ENCODE measurements at regions of chr16 and their contacts with region 1.

Region 1: GRCh38 chr16:48231727-48232492 is 12.2 kb upstream of the LONP2 start:
- DNase-seq: peak; percentile 49
- ATAC-seq: peak; percentile 91
- H3K4me3 ChIP-seq: no peak overlapping the region
- H3K27ac ChIP-seq: no peak overlapping the region
- H3K4me1 ChIP-seq: 0 out of 2 replicates have a peak, but pooled peaks cover 1% of the 10 kb centered on the region
- H3K27me3 ChIP-seq: peaks cover 6% of the 10 kb centered on the region
- CTCF ChIP-seq: peak; percentile 63
- POLR2A ChIP-seq: no peak
- RAD21 ChIP-seq: peak; percentile 63

Region 2: GRCh38 chr16:48182979-48183537 is 48.9 kb before region 1 on chr16:
- CTCF ChIA-PET with region 1: no interaction called
- POLR2A ChIA-PET with region 1: no interaction called
- dilution Hi-C with region 1: no loop called
- in situ Hi-C with region 1: no loop called
- intact Hi-C with region 1: no loop called
- DNase-seq: no peak
- ATAC-seq: no peak
- H3K4me3 ChIP-seq: no peak overlapping the region
- H3K27ac ChIP-seq: no peak overlapping the region
- H3K4me1 ChIP-seq: no peaks in the 10 kb centered on the region
- H3K27me3 ChIP-seq: peaks cover 15% of the 10 kb centered on the region
- CTCF ChIP-seq: no peak
- POLR2A ChIP-seq: no peak
- RAD21 ChIP-seq: no peak

Region 3: DNA sequence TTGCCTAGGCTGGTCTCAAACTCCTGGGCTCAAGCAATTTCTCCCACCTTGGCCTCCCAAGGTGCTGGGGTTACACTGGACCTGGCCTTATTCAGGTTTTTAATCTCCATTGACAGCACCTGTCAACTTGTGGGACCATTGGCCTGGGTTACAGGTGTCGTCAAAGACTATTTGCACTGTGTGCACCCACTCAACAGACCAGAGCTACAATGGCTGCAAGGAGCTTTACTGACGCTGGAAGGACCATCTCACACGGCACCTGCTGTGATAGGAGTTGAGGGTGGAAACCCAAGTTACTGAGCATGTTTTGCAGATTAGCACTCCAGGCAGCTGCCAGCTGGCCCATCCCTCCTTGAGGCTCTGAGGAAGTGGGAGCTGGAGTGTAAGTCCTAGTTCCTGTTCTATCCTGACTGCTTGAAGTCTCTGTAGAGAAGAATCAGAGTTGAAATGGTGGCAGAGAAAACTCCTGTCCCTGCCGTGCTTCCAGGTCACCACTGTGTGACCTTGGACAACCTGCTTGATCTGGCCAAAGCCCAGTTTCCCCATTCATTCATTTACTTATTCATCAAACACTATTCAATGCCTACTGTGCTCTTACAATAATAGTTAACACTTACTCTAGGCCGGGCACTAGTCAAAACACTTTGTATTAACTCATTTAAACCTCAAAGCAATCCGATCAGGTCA is 30.3 kb before region 1 on chr16:
- CTCF ChIA-PET with region 1: no interaction called
- POLR2A ChIA-PET with region 1: no interaction called
- dilution Hi-C with region 1: no loop called
- in situ Hi-C with region 1: no loop called
- intact Hi-C with region 1: loop called (anchors 1 kb)
- DNase-seq: no peak
- ATAC-seq: no peak
- H3K4me3 ChIP-seq: no peak overlapping the region
- H3K27ac ChIP-seq: no peak overlapping the region
- H3K4me1 ChIP-seq: no peaks in the 10 kb centered on the region
- H3K27me3 ChIP-seq: peaks cover 21% of the 10 kb centered on the region
- CTCF ChIP-seq: no peak
- POLR2A ChIP-seq: no peak
- RAD21 ChIP-seq: no peak

Region 4: DNA sequence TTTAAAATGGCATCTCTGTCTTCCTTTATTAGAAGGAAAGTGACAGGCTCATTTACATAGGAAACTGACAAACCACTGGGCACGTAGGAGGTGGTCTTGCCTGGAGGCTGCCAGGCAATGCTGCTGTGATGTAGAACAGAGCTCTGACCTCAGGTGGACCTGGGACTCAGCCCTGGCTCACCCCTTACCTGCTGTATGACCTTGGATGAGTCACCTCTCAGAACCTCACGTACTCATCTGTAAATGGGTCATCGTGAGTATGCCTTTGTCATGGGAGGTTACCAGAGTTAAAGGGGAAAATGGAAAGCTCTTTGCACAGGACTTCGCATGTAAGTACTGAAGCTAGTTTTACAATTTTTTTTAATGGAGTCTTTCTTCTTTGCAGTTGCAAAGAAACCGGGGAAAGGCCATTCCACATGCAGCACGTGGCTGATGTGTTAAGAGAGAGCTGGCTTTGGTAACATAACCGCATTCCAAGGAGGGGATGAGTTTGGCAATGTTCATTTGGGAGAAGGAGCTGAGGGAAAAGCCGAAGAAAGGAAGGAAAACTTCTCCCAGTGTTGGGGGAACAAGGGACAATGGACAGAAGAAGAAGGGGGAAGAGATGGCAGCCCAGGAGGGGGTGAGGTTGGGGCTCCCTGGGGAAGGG is 25.2 kb before region 1 on chr16:
- CTCF ChIA-PET with region 1: interaction called, 5 read pairs
- POLR2A ChIA-PET with region 1: interaction called, 23 read pairs
- dilution Hi-C with region 1: no loop called
- in situ Hi-C with region 1: no loop called
- intact Hi-C with region 1: loop called (anchors 1 kb)
- DNase-seq: peak; percentile 13
- ATAC-seq: 0 out of 2 replicates have a peak, but pooled peaks have one; percentile 40
- H3K4me3 ChIP-seq: no peak overlapping the region
- H3K27ac ChIP-seq: no peak overlapping the region
- H3K4me1 ChIP-seq: no peaks in the 10 kb centered on the region
- H3K27me3 ChIP-seq: peaks cover 25% of the 10 kb centered on the region
- CTCF ChIP-seq: no peak
- POLR2A ChIP-seq: no peak
- RAD21 ChIP-seq: no peak

Region 5: DNA sequence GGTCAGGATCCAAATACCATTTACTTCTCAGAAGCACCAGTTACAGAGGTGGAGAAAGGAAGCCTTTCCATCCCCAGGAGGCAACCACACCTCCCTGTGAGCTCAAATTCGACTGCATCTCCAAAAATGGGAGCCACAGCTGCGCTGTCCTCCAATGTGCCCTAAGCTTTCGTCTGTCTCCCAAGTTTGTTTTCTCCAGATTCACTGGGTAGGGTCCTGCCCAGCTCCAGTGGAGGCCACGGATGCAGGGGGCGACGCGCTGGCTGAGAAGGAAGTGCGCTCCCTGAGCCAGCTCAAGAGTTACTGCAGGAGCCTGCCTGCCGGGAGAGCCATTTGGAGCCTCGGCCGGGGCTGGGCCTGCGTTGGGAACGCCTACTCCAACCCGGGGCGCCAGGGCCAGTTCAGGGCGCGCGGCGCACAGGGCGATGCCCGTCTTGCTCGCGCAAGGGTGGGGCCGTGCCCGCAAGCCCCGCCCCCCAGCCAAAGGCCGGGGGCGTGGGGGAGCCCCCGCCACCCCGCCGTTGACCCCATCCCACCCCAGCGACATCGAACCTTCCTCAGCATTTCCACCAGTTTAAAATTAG is 133.8 kb after region 1 on chr16:
- CTCF ChIA-PET with region 1: no interaction called
- POLR2A ChIA-PET with region 1: no interaction called
- dilution Hi-C with region 1: no loop called
- in situ Hi-C with region 1: no loop called
- intact Hi-C with region 1: no loop called
- DNase-seq: peak; percentile 80
- ATAC-seq: peak; percentile 99
- H3K4me3 ChIP-seq: peak overlapping the region; percentile 50
- H3K27ac ChIP-seq: peak overlapping the region; percentile 84
- H3K4me1 ChIP-seq: peaks cover 13% of the 10 kb centered on the region
- H3K27me3 ChIP-seq: no peaks in the 10 kb centered on the region
- CTCF ChIP-seq: no peak
- POLR2A ChIP-seq: peak; percentile 77
- RAD21 ChIP-seq: no peak

Region 6: GRCh38 chr16:48426244-48427141 is 194.6 kb after region 1 on chr16:
- CTCF ChIA-PET with region 1: no interaction called
- POLR2A ChIA-PET with region 1: no interaction called
- dilution Hi-C with region 1: no loop called
- in situ Hi-C with region 1: no loop called
- intact Hi-C with region 1: no loop called
- DNase-seq: peak; percentile 32
- ATAC-seq: peak; percentile 48; the same call in 1 of the 2 replicates
- H3K4me3 ChIP-seq: no peak overlapping the region
- H3K27ac ChIP-seq: no peak overlapping the region
- H3K4me1 ChIP-seq: peaks cover 7% of the 10 kb centered on the region
- H3K27me3 ChIP-seq: no peaks in the 10 kb centered on the region
- CTCF ChIP-seq: no peak
- POLR2A ChIP-seq: no peak
- RAD21 ChIP-seq: no peak

Region 7: GRCh38 chr16:48542020-48542473 is 310.1 kb after region 1 on chr16:
- CTCF ChIA-PET with region 1: no interaction called
- POLR2A ChIA-PET with region 1: no interaction called
- dilution Hi-C with region 1: no loop called
- in situ Hi-C with region 1: no loop called
- intact Hi-C with region 1: loop called (anchors 1 kb)
- DNase-seq: peak; percentile 54
- ATAC-seq: peak; percentile 79
- H3K4me3 ChIP-seq: no peak overlapping the region
- H3K27ac ChIP-seq: no peak overlapping the region
- H3K4me1 ChIP-seq: peaks cover 5% of the 10 kb centered on the region; the same call in 1 of the 2 replicates
- H3K27me3 ChIP-seq: no peaks in the 10 kb centered on the region
- CTCF ChIP-seq: peak; percentile 68
- POLR2A ChIP-seq: 0 out of 2 replicates have a peak, but pooled peaks have one; percentile 35
- RAD21 ChIP-seq: peak; percentile 89

Region 8: DNA sequence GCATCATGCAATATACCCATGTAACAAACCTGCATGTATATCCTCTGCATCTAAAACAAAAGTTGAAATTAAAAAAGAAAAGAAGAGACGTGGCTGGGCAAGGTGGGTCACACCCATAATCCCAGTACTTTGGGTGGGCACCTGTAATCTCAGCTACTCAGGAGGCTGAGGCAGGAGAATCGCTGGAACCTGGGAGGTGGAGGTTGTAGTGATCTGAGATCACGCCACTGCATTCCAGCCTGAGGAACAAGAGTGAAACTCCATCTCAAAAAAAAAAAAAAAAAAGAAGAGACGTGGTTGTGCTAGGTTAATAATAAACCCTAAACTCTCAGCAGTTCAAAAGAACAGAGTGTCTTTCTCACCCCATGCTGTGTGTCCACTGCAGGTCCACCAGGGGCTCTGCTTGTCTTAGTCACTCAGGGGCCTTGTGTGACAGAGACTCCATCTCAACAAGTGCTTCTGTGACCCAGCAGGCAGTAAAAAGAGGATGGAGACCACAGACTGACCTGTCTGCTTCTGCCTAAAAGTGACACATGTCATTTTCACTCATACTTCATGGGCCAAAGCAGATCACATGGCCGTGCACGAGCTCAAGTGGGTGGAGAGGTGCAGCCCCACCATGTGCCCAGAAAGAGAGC is 400.3 kb after region 1 on chr16:
- CTCF ChIA-PET with region 1: interaction called, 4 read pairs
- POLR2A ChIA-PET with region 1: no interaction called
- dilution Hi-C with region 1: no loop called
- in situ Hi-C with region 1: loop called (anchors 5 kb)
- intact Hi-C with region 1: loop called (anchors 1 kb)
- DNase-seq: no peak
- ATAC-seq: no peak
- H3K4me3 ChIP-seq: no peak overlapping the region
- H3K27ac ChIP-seq: no peak overlapping the region
- H3K4me1 ChIP-seq: peaks cover 2% of the 10 kb centered on the region; the same call in 1 of the 2 replicates
- H3K27me3 ChIP-seq: peaks cover 4% of the 10 kb centered on the region; the same call in 1 of the 2 replicates
- CTCF ChIP-seq: no peak
- POLR2A ChIP-seq: no peak
- RAD21 ChIP-seq: no peak

Measured in IMR-90 (cell line).